Posterior vena cava (tissue), 2 donors: ENCODE measurements at regions of chr7 and their contacts with region 1.

Region 1: GRCh38 chr7:151579644-151580043 is 59.9 kb upstream of the RHEB start:
- DNase-seq: no peak

Region 2: GRCh38 chr7:149787428-149788299 is 1792.0 kb before region 1 on chr7:
- intact Hi-C with region 1: no loop called
- DNase-seq: no peak

Region 3: GRCh38 chr7:151539088-151539671 is 40.5 kb before region 1 on chr7:
- intact Hi-C with region 1: loop called in 1 of 2 experiments (anchors 1 kb)
- DNase-seq: no peak

Region 4: GRCh38 chr7:151616443-151617213 is 37.0 kb after region 1 on chr7:
- intact Hi-C with region 1: loop called in 1 of 2 experiments (anchors 5 kb)
- DNase-seq: no peak